ENCODE measurements at regions of chr4 and their contacts with region 1.

Region 1: GRCh38 chr4:183876268-183876934 is 28.7 kb upstream of the STOX2 start:
- DNase-seq: peak; percentile 62 to 90
- H3K4me3 ChIP-seq: peak overlapping the region; percentile 63
- H3K27ac ChIP-seq: peak overlapping the region; percentile 72 to 77
- H3K4me1 ChIP-seq: peaks cover 0 to 9% of the 10 kb centered on the region in 2 donors
- H3K27me3 ChIP-seq: no peaks in the 10 kb centered on the region
- CTCF ChIP-seq: no peak

Region 2: GRCh38 chr4:183905081-183905592 is 28.7 kb after region 1 on chr4 and contains the start of gene STOX2:
- intact Hi-C with region 1: loop called (anchors 2 kb)
- DNase-seq: peak; percentile 25 to 81
- H3K4me3 ChIP-seq: peak within 1 kb of the TSS; percentile 58 to 76
- H3K27ac ChIP-seq: peak within 1 kb of the TSS; percentile 48 to 60
- H3K4me1 ChIP-seq: no peaks in the 10 kb centered on the region
- H3K27me3 ChIP-seq: no peaks in the 10 kb centered on the region
- CTCF ChIP-seq: no peak
- total RNA-seq, gene STOX2: 41.7 TPM

Region 3: GRCh38 chr4:183987987-183988392 is 111.6 kb after region 1 on chr4:
- intact Hi-C with region 1: loop called (anchors 10 kb)
- DNase-seq: peak; percentile 54 to 87
- H3K4me3 ChIP-seq: peak overlapping the region; percentile 51 to 54
- H3K27ac ChIP-seq: peak overlapping the region; percentile 52 to 77
- H3K4me1 ChIP-seq: peaks cover 0 to 13% of the 10 kb centered on the region in 2 donors
- H3K27me3 ChIP-seq: no peaks in the 10 kb centered on the region
- CTCF ChIP-seq: no peak

Region 4: GRCh38 chr4:184007891-184008290 is 131.5 kb after region 1 on chr4:
- intact Hi-C with region 1: no loop called
- DNase-seq: no peak
- H3K4me3 ChIP-seq: no peak overlapping the region
- H3K27ac ChIP-seq: no peak overlapping the region
- H3K4me1 ChIP-seq: no peaks in the 10 kb centered on the region
- H3K27me3 ChIP-seq: no peaks in the 10 kb centered on the region
- CTCF ChIP-seq: no peak

Region 5: GRCh38 chr4:184163813-184164212 is 287.4 kb after region 1 on chr4:
- intact Hi-C with region 1: no loop called
- DNase-seq: no peak
- H3K4me3 ChIP-seq: no peak overlapping the region
- H3K27ac ChIP-seq: no peak overlapping the region
- H3K4me1 ChIP-seq: no peaks in the 10 kb centered on the region
- H3K27me3 ChIP-seq: no peaks in the 10 kb centered on the region
- CTCF ChIP-seq: peak; percentile 11 to 63 (median 12)

Measured in ascending aorta (tissue), 2 donors.